ENCODE measurements at regions of chr1 and their contacts with region 1.

Region 1: DNA sequence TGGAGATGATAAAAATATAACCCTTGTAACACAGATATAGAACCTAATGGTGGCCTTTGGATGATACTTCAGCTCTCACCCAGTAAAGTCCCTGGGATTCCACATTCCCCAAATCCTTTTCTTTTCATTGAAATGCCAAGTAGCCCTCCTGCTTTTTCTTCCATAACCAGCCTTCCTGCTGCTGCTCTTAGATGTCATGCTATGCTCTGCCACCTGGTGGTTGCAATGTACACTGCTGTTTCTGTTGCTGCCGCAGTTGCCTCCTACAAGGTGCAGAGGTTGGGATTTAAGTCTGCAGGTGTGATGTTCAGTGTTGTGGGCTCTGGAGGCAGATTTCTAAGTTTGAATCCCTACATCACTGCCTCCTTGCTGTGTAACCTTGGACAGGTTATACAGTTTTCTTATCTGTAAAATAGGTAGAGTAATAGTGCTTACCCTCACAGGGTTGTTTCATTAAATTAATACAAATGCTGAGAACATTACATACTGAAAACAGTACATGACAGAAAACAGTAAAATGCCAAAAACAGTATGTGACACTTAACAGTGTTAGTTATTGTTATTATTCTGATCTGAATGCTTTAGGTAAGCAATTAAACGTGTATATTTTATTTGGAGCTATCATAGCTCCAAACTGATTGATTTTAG is 64.3 kb downstream of the CAMSAP2 start:
- DNase-seq: peak; percentile 57
- H3K4me3 ChIP-seq: no peak overlapping the region
- H3K27ac ChIP-seq: no peak overlapping the region
- H3K4me1 ChIP-seq: no peaks in the 10 kb centered on the region
- H3K27me3 ChIP-seq: no peaks in the 10 kb centered on the region
- CTCF ChIP-seq: peak; percentile 95 to 96

Region 2: DNA sequence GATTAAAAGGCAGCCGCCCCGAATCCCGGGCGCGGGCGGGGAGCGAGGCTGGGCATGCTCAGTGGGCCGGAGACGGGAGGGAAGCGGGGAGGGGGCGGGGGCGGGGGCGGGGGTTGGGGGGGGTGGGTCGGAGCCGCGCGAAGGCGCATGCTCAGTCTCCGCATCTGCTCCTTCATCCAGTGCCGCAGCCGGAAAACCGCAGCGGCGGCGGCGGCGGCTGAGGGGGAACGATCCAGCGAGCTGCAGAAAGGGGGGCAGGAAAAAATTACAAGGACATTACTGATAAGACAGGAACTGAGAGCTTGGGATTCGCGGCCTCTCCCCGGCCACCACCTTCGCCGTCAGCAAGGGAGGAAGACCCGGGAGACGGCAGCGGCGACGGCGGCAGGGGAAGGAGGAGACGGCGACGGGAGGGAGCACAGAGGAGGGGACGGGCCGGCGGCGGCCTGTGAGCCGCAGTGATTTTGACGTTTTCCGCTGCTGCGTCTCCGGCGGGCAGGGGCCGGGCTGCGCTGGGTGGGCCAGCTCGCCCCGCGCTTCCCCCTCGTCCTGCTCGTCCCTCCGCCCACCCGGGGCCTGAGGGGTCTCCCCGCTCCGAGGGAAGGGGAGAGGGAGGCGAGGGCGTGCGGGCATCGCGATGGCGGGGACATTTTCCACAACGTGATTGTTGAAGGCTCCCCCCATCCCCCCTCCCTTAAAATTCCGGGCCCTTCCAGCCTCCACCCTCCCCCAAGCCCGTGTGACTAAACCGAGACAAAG is 64.1 kb before region 1 on chr1 and contains the start of gene CAMSAP2:
- CTCF ChIA-PET with region 1: no interaction called
- dilution Hi-C with region 1: no loop called
- in situ Hi-C with region 1: no loop called
- intact Hi-C with region 1: loop called (anchors 2 kb)
- DNase-seq: peak; percentile 85
- H3K4me3 ChIP-seq: peak within 1 kb of the TSS; percentile 90 to 94 (median 93)
- H3K27ac ChIP-seq: peak within 1 kb of the TSS; percentile 88
- H3K4me1 ChIP-seq: peaks cover 10% of the 10 kb centered on the region
- H3K27me3 ChIP-seq: no peaks in the 10 kb centered on the region
- CTCF ChIP-seq: no peak
- total RNA-seq, gene CAMSAP2: 79.7 to 118 TPM

Region 3: GRCh38 chr1:200959411-200959921 is 156.5 kb after region 1 on chr1:
- CTCF ChIA-PET with region 1: no interaction called
- dilution Hi-C with region 1: no loop called
- in situ Hi-C with region 1: no loop called
- intact Hi-C with region 1: no loop called
- DNase-seq: no peak
- H3K4me3 ChIP-seq: no peak overlapping the region
- H3K27ac ChIP-seq: no peak overlapping the region
- H3K4me1 ChIP-seq: peaks cover 10% of the 10 kb centered on the region
- H3K27me3 ChIP-seq: no peaks in the 10 kb centered on the region
- CTCF ChIP-seq: no peak